ENCODE measurements at regions of chr9 and their contacts with region 1.

Region 1: DNA sequence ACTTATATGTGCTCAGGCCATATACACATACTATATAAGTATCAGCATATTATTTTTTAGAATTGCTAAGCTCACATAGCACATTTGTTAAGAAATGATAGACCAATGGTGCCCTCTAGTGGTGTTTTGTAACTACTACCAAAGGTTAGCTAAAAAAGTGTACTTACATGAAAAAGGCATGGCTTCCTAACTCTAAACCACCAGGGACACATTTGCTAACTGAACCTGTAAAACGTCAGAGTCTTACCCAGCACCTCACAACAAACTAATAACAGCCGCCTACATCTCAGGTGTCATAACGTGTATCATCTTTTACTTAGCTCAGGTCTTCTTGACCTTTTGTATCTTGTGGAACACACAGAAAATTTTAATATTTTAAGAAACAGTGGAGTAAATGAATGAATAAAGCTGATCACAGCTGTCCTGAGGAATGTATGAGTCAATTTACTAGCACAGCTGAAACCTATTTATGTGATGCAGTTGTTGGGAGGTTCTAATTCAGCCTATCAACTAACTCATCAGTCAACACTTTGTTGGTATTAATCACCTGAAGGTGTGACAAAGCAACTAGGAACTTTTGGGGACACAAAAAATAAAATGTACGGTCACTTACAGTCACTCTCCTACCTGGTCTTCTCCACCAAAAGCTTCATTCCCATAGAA is 72.9 kb downstream of the BAAT start:
- DNase-seq: peak; percentile 77
- H3K4me3 Mint-ChIP-seq: no peak overlapping the region
- H3K27ac Mint-ChIP-seq: no peak overlapping the region
- H3K4me1 Mint-ChIP-seq: no peaks in the 10 kb centered on the region
- H3K27me3 Mint-ChIP-seq: no peaks in the 10 kb centered on the region

Region 2: DNA sequence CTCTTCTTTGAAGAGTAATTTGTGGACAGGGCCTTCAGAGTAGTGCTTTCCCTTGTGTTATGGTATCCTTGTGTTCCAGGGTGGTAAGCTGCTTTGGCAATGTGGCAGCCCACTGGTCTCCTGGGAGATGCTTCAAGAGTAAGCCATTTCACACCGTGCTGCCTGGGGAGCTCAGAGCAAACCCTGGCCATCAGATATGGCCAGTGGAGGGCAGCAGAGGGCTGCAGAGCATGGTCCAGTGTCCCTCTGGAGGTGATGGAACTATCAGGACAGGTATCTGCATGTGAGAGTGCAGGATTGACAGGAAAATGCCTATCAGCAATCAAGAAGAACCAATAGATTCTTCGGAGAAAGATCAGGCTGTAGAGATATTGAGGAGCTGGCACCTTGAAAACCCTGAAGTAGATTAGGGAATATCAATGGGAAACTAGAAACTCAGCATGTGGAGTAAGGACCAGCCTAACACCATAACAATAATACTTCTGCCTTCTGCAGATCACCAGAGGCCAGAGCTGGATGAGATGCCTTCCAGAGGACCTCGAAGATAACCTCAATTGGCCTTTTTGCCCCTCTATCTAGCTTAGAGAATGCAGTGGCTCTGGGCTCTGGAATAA is 192.6 kb before region 1 on chr9:
- intact Hi-C with region 1: loop called (anchors 5 kb)
- DNase-seq: peak; percentile 70
- H3K4me3 Mint-ChIP-seq: no peak overlapping the region
- H3K27ac Mint-ChIP-seq: no peak overlapping the region
- H3K4me1 Mint-ChIP-seq: no peaks in the 10 kb centered on the region
- H3K27me3 Mint-ChIP-seq: no peaks in the 10 kb centered on the region

Measured in activated CD4-positive, alpha-beta T cell treated with anti-CD3 and anti-CD28 coated beads, Interleukin-2, amount 10 ng/mL, durations not matched to agents 24 days and 14 days (primary cell).